BJ (cell line): ENCODE measurements at regions of chr14 and their contacts with region 1.

Region 1: GRCh38 chr14:56474419-56475022 is 105.1 kb upstream of the TMEM260 start:
- DNase-seq: no peak
- H3K4me3 ChIP-seq: no peak overlapping the region
- H3K27me3 ChIP-seq: peaks cover 1% of the 10 kb centered on the region; the same call in 1 of the 2 replicates
- CTCF ChIP-seq: peak; percentile 75

Region 2: DNA sequence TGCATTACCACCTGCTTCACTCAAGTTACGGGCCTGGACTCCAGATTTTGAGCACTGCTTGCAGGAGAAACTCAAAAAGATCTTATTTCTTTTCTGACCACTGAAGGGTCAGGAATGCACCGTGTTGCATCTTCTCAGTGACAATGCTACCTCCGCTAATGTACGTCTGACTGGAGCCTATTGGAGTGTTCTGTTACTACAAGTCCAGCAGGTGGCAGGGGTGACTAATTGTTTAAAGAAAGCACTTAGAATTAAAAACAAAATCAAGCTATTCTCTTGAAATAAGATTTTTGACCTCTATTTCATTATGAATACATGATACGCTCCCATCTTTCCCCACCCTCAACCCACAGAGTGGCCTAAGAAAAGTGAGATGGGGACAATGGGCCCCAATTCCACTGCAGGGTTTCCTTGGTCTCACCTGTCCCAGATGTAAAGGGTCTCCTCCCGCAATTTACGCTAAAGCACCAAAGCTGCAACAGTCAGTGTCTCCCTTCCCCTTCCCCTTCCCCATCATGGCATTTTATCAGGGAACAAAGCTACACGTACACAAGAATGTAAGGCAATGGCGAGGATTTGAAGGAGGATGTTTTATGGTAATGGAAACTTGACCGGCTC is 1036.3 kb before region 1 on chr14:
- CTCF ChIA-PET with region 1: interaction called, 18 read pairs
- POLR2A ChIA-PET with region 1: no interaction called
- DNase-seq: no peak
- H3K4me3 ChIP-seq: no peak overlapping the region
- H3K27me3 ChIP-seq: peaks cover 4% of the 10 kb centered on the region; the same call in 1 of the 2 replicates
- CTCF ChIP-seq: peak; percentile 55

Region 3: DNA sequence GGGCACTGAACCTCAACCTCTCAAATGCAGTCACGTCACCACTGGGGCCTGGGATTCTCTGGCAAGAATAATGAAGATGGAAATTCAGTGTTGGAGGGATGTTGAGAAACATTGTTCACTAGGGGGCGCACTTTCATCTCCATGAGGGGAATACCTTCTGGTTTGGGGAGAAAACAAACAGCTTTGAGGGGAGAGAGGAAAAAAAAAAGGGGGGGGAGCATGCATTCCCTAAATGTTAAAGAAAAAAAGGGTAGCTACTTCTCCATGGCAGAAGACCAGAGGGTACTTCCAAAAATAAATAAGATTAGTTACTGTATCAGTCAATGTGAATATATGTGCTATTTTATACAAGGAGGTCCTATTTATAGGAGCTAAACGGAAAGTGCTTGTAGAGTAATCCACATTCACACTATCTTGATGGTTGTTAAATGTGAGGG is 1028.3 kb before region 1 on chr14:
- CTCF ChIA-PET with region 1: interaction called, 18 read pairs
- POLR2A ChIA-PET with region 1: no interaction called
- DNase-seq: no peak
- H3K4me3 ChIP-seq: no peak overlapping the region
- H3K27me3 ChIP-seq: no peaks in the 10 kb centered on the region
- CTCF ChIP-seq: peak; percentile 69

Region 4: GRCh38 chr14:55699131-55700057 is 775.1 kb before region 1 on chr14:
- CTCF ChIA-PET with region 1: interaction called, 19 read pairs
- POLR2A ChIA-PET with region 1: interaction called, 19 read pairs
- DNase-seq: no peak
- H3K4me3 ChIP-seq: no peak overlapping the region
- H3K27me3 ChIP-seq: no peaks in the 10 kb centered on the region
- CTCF ChIP-seq: no peak

Region 5: DNA sequence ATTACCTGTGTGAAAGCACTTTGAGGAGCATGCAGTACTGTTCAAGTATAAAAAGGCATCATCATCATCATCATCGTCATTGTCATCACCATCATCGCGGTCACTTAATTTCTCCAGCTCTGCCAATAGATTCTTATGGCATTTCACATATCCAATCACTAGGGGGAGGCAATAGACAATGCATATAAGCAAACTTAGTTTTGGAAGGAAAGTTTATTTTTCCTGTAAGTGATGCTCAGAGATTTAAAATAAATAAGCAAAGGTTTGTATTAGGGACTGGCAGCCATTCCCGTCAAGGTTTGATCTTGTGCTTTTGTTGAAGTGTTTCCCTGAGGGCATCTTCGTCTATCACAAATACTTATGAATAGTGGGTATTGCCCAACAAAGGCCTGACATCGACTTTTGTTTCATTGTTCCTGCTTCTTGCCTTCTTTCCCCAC is 767.1 kb before region 1 on chr14:
- CTCF ChIA-PET with region 1: interaction called, 19 read pairs
- POLR2A ChIA-PET with region 1: no interaction called
- DNase-seq: no peak
- H3K4me3 ChIP-seq: no peak overlapping the region
- H3K27me3 ChIP-seq: no peaks in the 10 kb centered on the region
- CTCF ChIP-seq: peak; percentile 68

Region 6: DNA sequence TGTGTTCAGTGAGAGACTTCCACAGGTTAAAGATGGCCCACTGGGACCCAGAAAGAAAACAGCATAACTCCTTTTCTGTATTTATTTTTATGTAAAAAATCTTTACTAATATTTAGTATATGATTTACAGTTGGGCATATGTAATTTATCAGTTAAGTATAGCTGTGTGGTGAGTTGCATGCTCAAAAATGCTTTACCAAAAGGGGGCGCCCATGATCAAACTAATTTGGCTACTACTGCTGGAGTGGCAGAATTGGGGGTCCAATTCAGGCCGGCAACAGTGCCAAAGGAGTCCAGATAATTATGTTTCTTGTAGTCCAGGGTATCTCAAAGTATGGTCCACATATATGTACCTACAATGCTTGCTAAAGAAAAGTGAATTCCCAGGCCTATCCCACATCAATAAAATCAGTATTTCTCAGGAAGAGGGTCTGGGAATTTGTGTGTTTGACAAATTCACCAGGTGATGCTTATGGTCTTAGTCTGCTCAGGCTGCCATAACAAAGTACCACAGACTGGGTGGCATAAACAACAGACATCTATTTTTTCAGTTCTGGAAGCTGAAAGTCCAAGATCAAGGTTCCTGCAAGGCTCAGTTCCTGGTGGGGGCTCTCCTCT is 742.5 kb before region 1 on chr14:
- CTCF ChIA-PET with region 1: interaction called, 31 read pairs
- POLR2A ChIA-PET with region 1: no interaction called
- DNase-seq: no peak
- H3K4me3 ChIP-seq: no peak overlapping the region
- H3K27me3 ChIP-seq: peaks cover 2% of the 10 kb centered on the region; the same call in 1 of the 2 replicates
- CTCF ChIP-seq: peak; percentile 66

Region 7: GRCh38 chr14:56491299-56492285 is 17.1 kb after region 1 on chr14:
- CTCF ChIA-PET with region 1: interaction called, 23 read pairs
- POLR2A ChIA-PET with region 1: no interaction called
- DNase-seq: no peak
- H3K4me3 ChIP-seq: no peak overlapping the region
- H3K27me3 ChIP-seq: no peaks in the 10 kb centered on the region; the same call in 1 of the 2 replicates
- CTCF ChIP-seq: peak; percentile 81